Heart right ventricle (tissue), 16 donors: ENCODE measurements at regions of chr1 and their contacts with region 1.

Region 1: GRCh38 chr1:113811888-113812660 is at the start of gene RSBN1:
- DNase-seq: peak; percentile 99
- ATAC-seq: peak; percentile 97 to 99 (median 98)
- H3K4me3 ChIP-seq: peak within 1 kb of the TSS; percentile 76 to 98 (median 91)
- H3K27ac ChIP-seq: peak within 1 kb of the TSS; percentile 77 to 97 (median 95)
- H3K4me1 ChIP-seq: peaks cover 0 to 34% (median 25%) of the 10 kb centered on the region in 9 donors
- H3K27me3 ChIP-seq: no peaks in the 10 kb centered on the region
- CTCF ChIP-seq: peak in 6 of 9 donors; percentile 7 to 47 (median 24)
- total RNA-seq, gene RSBN1: 7.5 to 13.9 (median 11.8) TPM

Region 2: DNA sequence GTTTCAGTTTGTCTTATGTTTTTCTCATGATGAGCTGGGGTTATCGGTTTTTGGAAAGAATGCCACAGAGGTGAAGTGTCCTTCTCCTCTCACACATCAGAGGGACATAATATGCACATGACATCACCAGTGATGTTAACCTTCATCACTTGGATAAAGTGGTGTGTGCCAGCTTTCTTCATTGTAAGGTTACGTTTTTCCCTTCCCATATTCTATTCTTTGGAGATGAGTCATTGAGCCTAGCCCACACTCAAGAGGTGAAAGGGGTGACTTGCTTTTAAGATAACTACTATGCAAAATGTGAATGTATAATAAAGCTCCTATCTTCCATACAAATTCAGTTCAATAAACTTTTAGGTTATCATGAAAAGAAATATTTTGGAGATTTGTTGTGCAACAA is 458.5 kb before region 1 on chr1:
- intact Hi-C with region 1: no loop called
- DNase-seq: no peak
- ATAC-seq: peak in 1 of 8 donors; percentile 58
- H3K4me3 ChIP-seq: no peak overlapping the region
- H3K27ac ChIP-seq: no peak overlapping the region
- H3K4me1 ChIP-seq: no peaks in the 10 kb centered on the region
- H3K27me3 ChIP-seq: no peaks in the 10 kb centered on the region
- CTCF ChIP-seq: no peak

Region 3: DNA sequence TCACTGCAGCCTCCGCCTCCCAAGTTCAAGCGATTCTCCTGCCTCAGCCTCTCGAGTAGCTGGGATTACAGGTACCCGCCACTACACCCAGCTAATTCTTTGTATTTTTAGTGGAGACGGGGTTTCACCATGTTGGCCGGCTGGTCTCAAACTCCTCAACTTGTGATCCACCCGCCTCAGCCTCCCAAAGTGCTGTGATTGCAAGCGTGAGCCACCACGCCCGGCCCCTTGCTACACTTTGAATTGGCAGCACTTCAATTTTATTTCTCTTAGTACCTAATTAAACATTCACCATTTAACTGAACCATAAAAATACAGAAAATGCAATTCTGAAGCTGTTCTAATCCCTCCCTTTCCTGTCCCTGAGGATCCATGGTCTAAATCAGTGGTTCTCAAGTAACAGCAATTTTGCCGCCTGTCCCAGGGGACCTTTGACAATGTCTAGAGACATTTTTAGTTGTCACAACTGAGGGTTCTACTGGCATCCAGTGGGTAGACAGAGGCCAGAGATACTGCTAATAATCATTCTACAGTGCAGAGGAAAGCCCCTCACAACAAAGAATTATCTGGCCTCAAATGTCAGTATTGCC is 79.7 kb after region 1 on chr1:
- intact Hi-C with region 1: no loop called
- DNase-seq: no peak
- ATAC-seq: no peak
- H3K4me3 ChIP-seq: no peak overlapping the region
- H3K27ac ChIP-seq: no peak overlapping the region
- H3K4me1 ChIP-seq: peaks cover 0 to 5% (median 0%) of the 10 kb centered on the region in 9 donors
- H3K27me3 ChIP-seq: no peaks in the 10 kb centered on the region
- CTCF ChIP-seq: no peak

Region 4: DNA sequence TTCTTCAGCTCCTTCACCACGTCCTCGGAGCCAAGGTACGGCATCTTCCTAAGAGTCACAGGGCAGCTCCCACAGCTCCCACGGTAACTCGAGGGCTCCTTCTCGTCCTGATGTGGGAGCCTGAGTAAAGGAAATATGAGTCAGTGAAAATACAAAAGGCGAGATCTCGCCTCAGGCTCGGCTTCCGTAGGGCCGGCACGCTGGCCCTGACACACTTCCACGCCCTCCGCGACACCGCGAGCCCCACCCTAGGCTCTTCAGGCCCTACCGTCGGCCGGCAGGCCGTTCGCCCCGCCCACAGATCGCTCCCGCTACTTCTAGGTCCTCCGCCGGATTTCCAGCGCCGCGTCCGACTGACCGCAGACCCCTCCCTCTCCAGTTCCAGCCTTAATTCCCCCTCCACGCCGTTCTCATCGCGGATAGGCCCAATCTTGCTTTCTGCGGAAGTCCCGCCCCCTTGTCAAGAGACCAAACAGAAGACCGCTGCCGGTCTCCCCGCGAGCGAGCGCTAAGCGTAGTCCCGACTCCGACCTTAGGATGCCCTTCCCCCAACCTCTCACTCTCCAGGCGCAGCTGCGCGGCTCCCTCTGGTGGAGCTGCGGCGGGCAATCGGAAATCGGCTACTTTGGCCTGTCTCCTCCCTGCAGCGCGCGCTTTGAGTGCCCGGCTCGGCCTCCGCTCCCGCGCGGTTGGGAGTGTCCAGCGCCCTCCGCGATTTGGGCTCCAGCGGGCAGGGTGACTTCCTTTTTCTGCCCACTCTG is 92.8 kb after region 1 on chr1 and contains the starts of genes AP4B1 and DCLRE1B:
- intact Hi-C with region 1: loop called in 2 of 10 experiments (anchors 2 kb)
- DNase-seq: peak; percentile 98 to 100
- ATAC-seq: peak; percentile 96 to 99 (median 98)
- H3K4me3 ChIP-seq: peak within 1 kb of the TSS; percentile 58 to 86 (median 78)
- H3K27ac ChIP-seq: peak within 1 kb of the TSS; percentile 52 to 95 (median 92)
- H3K4me1 ChIP-seq: peaks cover 0 to 49% (median 24%) of the 10 kb centered on the region in 9 donors
- H3K27me3 ChIP-seq: no peaks in the 10 kb centered on the region
- CTCF ChIP-seq: peak; percentile 37 to 88 (median 71)
- total RNA-seq, gene AP4B1: 9.1 to 13.9 (median 11.5) TPM
- total RNA-seq, gene DCLRE1B: 0.78 to 4.2 (median 2.1) TPM